ENCODE measurements at regions of chr1 and their contacts with region 1.

Region 1: DNA sequence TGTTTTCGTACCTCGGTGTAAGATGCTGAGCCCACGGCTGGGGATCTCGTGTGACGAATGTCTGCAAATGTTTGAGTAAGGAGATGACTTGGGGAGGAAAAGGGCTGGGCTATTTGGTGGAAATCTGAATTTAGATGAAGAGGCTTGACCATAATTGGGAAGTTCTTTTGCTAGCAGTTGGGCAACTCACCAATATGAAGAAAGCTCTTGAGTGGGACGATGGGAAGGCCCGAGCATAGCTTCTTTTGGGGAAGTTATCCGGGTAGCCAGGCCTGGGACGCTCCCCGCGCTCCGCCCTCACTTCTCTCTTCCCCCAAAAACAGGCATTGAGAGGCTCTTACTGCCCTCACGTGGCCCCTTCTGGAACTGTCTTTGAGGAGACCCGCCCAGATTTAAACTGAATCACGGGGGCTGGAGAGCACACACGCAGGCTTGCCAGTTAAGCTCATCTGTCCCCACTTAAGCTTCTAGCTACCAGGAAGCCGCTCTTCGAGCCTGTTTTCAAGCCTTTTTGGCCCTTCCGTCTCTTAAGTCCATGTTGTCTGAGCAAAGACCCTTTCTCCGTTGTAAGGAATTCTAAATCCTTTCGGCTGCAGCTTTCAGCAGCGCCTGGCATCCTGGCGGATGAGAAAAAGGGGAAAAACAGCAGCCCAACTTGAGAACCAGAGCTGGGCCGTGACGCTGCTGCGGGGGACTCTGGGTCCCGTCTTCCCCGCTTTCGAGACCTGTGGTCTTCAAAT is 93.1 kb downstream of the NID1 start:
- DNase-seq: peak; percentile 93
- ATAC-seq: peak; percentile 96
- H3K4me3 ChIP-seq: peak overlapping the region; percentile 40
- H3K27ac ChIP-seq: peak overlapping the region; percentile 95
- H3K4me1 ChIP-seq: peaks cover 14% of the 10 kb centered on the region
- H3K27me3 ChIP-seq: no peaks in the 10 kb centered on the region
- CTCF ChIP-seq: peak; percentile 96
- POLR2A ChIP-seq: peak; percentile 68; the same call in 1 of the 2 replicates
- RAD21 ChIP-seq: peak; percentile 97

Region 2: GRCh38 chr1:235513495-235514366 is 458.0 kb before region 1 on chr1:
- CTCF ChIA-PET with region 1: interaction called, 7 read pairs
- POLR2A ChIA-PET with region 1: no interaction called
- dilution Hi-C with region 1: no loop called
- in situ Hi-C with region 1: loop called (anchors 10 kb)
- intact Hi-C with region 1: loop called (anchors 2 kb)
- DNase-seq: peak; percentile 73
- ATAC-seq: peak; percentile 82
- H3K4me3 ChIP-seq: no peak overlapping the region
- H3K27ac ChIP-seq: no peak overlapping the region
- H3K4me1 ChIP-seq: no peaks in the 10 kb centered on the region
- H3K27me3 ChIP-seq: no peaks in the 10 kb centered on the region
- CTCF ChIP-seq: peak; percentile 92
- POLR2A ChIP-seq: no peak
- RAD21 ChIP-seq: peak; percentile 89

Region 3: DNA sequence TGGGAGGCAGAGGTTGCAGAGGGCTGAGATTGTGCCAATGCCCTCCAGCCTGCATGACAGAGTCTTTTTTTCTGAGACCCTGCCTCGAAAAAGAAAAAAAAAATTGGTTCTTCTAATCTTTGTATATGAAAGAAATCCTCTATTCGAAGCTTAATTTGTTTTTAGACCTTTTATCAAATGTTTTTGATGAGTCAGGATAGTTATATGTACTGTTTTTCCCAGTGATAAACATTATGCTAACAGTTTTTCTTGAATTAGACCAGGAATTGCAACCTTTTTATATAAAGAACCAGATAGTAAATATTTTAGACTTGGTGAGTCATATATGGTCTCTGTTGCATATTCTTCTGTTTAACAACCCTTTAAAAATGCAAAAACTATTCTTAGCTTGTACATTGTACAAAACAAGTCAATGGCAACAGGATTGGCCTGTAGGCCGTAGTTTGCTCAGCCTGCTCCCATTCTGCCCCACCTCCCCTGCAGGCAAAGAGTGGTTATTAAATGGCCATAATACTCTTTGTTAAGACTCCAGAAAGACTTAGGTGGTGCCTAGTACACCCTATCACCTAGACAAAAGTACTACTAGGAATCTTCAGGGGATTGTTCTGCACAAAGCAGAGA is 150.3 kb before region 1 on chr1:
- CTCF ChIA-PET with region 1: interaction called, 14 read pairs
- POLR2A ChIA-PET with region 1: interaction called, 3 read pairs
- dilution Hi-C with region 1: no loop called
- in situ Hi-C with region 1: no loop called
- intact Hi-C with region 1: no loop called
- DNase-seq: peak; percentile 90
- ATAC-seq: peak; percentile 97
- H3K4me3 ChIP-seq: no peak overlapping the region
- H3K27ac ChIP-seq: peak overlapping the region; percentile 83; the same call in 1 of the 2 replicates
- H3K4me1 ChIP-seq: peaks cover 6% of the 10 kb centered on the region
- H3K27me3 ChIP-seq: no peaks in the 10 kb centered on the region
- CTCF ChIP-seq: peak; percentile 21; the same call in 1 of the 2 replicates
- POLR2A ChIP-seq: no peak
- RAD21 ChIP-seq: no peak

Region 4: GRCh38 chr1:235910357-235911299 is 61.1 kb before region 1 on chr1:
- CTCF ChIA-PET with region 1: interaction called, 4 read pairs
- POLR2A ChIA-PET with region 1: no interaction called
- dilution Hi-C with region 1: no loop called
- in situ Hi-C with region 1: no loop called
- intact Hi-C with region 1: loop called (anchors 5 kb)
- DNase-seq: peak; percentile 97
- ATAC-seq: peak; percentile 79
- H3K4me3 ChIP-seq: no peak overlapping the region
- H3K27ac ChIP-seq: peak overlapping the region; percentile 84
- H3K4me1 ChIP-seq: peaks cover 17% of the 10 kb centered on the region
- H3K27me3 ChIP-seq: peaks cover 9% of the 10 kb centered on the region
- CTCF ChIP-seq: no peak
- POLR2A ChIP-seq: no peak
- RAD21 ChIP-seq: peak; percentile 19

Region 5: DNA sequence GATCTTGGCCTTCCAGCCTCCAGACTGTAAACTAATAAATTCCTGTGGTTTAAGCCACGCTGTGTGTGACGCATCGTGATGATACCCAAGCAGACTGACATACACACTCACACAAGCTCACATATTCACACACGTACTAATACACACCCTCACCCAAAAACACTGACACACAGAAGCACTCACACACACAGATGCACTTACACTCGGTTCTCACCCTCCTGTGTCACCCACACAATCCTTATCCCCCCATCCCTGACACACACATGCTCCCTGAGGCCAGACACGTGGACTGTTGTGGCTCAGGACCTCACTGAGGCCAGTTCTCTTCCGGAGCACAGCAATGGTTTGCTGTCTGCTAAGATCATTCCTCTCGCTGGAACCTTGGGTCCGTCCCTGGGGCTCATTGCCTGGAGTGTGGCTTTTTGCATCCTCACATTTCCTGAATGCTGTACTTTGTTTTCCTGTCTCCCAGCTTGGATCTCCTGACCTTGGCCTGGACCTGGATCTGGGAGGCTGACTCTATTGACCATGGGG is 28.1 kb before region 1 on chr1:
- CTCF ChIA-PET with region 1: interaction called, 10 read pairs
- POLR2A ChIA-PET with region 1: no interaction called
- dilution Hi-C with region 1: no loop called
- in situ Hi-C with region 1: no loop called
- intact Hi-C with region 1: no loop called
- DNase-seq: peak; percentile 100
- ATAC-seq: peak; percentile 94
- H3K4me3 ChIP-seq: no peak overlapping the region
- H3K27ac ChIP-seq: peak overlapping the region; percentile 16
- H3K4me1 ChIP-seq: peaks cover 12% of the 10 kb centered on the region
- H3K27me3 ChIP-seq: peaks cover 5% of the 10 kb centered on the region
- CTCF ChIP-seq: no peak
- POLR2A ChIP-seq: no peak
- RAD21 ChIP-seq: peak; percentile 4; the same call in 1 of the 2 replicates

Region 6: GRCh38 chr1:236064674-236065508 is 93.2 kb after region 1 on chr1 and contains the start of gene NID1:
- CTCF ChIA-PET with region 1: interaction called, 8 read pairs
- POLR2A ChIA-PET with region 1: no interaction called
- dilution Hi-C with region 1: no loop called
- in situ Hi-C with region 1: no loop called
- intact Hi-C with region 1: loop called (anchors 1 kb)
- DNase-seq: peak; percentile 79
- ATAC-seq: peak; percentile 90
- H3K4me3 ChIP-seq: peak within 1 kb of the TSS; percentile 78
- H3K27ac ChIP-seq: peak within 1 kb of the TSS; percentile 50
- H3K4me1 ChIP-seq: peaks cover 3% of the 10 kb centered on the region; the same call in 1 of the 2 replicates
- H3K27me3 ChIP-seq: no peaks in the 10 kb centered on the region
- CTCF ChIP-seq: peak; percentile 36
- POLR2A ChIP-seq: 0 out of 2 replicates have a peak, but pooled peaks have one; percentile 22
- RAD21 ChIP-seq: no peak
- total RNA-seq, gene NID1: 21.9 and 23.9 TPM in 2 replicates

Region 7: DNA sequence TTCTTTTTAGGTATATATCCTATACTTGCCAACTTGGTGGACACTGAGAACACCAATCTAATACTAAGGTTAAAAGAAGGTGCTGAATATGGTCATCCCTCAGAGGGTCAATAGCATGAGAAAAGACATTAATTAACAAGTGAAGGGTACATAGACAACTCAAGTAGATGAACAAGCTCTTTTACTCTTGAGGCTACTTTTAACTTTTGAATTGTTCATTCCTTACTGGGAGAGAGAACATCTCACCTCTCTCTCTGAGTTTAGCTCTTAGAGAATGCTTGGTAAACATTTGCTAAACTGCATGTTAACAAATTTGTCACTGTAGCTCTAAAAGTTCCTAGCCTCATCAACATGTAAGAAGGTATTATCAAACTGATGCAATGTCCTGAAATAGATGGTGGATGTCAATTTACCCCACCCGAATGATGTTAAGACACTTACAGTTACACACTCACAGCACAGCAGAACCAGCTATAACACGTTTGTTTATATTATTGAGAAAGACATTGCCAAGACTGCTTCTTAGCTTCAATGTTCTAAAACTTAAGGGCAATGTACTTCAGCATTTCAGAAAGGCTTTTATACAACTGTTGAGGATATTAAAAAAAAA is 596.6 kb after region 1 on chr1:
- CTCF ChIA-PET with region 1: no interaction called
- POLR2A ChIA-PET with region 1: no interaction called
- dilution Hi-C with region 1: no loop called
- in situ Hi-C with region 1: no loop called
- intact Hi-C with region 1: no loop called
- DNase-seq: peak; percentile 39
- ATAC-seq: no peak
- H3K4me3 ChIP-seq: no peak overlapping the region
- H3K27ac ChIP-seq: no peak overlapping the region
- H3K4me1 ChIP-seq: no peaks in the 10 kb centered on the region
- H3K27me3 ChIP-seq: no peaks in the 10 kb centered on the region
- CTCF ChIP-seq: no peak
- POLR2A ChIP-seq: no peak
- RAD21 ChIP-seq: no peak

Region 8: DNA sequence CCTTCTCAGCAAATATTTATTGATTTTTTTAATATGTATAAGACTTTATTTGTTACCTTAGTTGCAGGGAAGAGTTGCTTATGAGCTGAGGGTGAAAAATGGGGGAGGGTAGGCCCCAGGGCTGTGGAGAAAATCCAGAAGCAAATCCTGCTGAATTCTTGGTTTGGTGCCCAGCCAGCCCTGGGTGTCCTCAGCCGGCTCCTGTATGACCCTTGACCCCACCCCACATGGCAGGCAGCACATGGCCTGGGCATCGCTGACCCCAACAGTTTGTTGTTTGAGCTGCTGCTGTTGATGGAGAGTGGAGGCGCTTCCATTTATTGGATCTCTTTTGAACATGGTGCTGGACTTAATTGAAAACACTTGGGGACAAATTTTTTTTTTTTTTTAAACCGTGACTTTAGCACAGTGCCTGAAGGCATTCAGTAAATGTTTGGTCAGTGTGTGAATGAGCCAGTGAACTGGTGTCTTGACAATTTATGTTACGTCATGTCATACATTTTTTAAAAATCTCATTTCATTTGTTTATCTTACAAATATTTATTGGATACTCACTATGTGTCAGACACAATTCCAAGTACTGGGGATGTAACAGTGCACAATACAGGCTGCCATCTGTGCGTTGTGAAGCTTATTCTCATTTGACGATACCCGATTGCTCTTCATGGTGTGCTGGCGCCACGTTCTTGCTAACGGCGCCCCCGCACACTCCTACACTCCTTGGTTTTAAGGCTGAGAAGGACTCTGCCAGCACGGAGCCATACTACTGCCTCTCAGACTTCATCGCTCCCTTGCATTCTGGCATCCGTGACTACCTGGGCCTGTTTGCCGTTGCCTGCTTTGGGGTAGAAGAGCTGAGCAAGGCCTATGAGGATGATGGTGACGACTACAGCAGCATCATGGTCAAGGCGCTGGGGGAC is 922.1 kb after region 1 on chr1:
- CTCF ChIA-PET with region 1: no interaction called
- POLR2A ChIA-PET with region 1: no interaction called
- dilution Hi-C with region 1: no loop called
- in situ Hi-C with region 1: no loop called
- intact Hi-C with region 1: no loop called
- DNase-seq: peak; percentile 66
- ATAC-seq: peak; percentile 77
- H3K4me3 ChIP-seq: no peak overlapping the region
- H3K27ac ChIP-seq: no peak overlapping the region
- H3K4me1 ChIP-seq: no peaks in the 10 kb centered on the region
- H3K27me3 ChIP-seq: no peaks in the 10 kb centered on the region
- CTCF ChIP-seq: no peak
- POLR2A ChIP-seq: no peak
- RAD21 ChIP-seq: no peak